ENCODE measurements at regions of chr9 and their contacts with region 1.

Region 1: GRCh38 chr9:134356570-134357504 is 30.6 kb downstream of the RXRA start:
- DNase-seq: peak; percentile 93 to 95
- H3K4me3 ChIP-seq: peak overlapping the region; percentile 63
- H3K27ac ChIP-seq: peak overlapping the region; percentile 87
- H3K4me1 ChIP-seq: peaks cover 94% of the 10 kb centered on the region
- H3K27me3 ChIP-seq: no peaks in the 10 kb centered on the region
- CTCF ChIP-seq: no peak

Region 2: GRCh38 chr9:134325817-134326723 is 30.8 kb before region 1 on chr9 and contains the start of gene RXRA:
- CTCF ChIA-PET with region 1: interaction called, 6 read pairs
- POLR2A ChIA-PET with region 1: interaction called, 5 read pairs
- intact Hi-C with region 1: loop called (anchors 1 kb)
- DNase-seq: peak; percentile 58 to 93
- H3K4me3 ChIP-seq: peak within 1 kb of the TSS; percentile 87
- H3K27ac ChIP-seq: peak within 1 kb of the TSS; percentile 66
- H3K4me1 ChIP-seq: peaks cover 32% of the 10 kb centered on the region
- H3K27me3 ChIP-seq: no peaks in the 10 kb centered on the region
- CTCF ChIP-seq: no peak
- total RNA-seq, gene RXRA: 116 and 146 TPM in 2 replicates

Region 3: DNA sequence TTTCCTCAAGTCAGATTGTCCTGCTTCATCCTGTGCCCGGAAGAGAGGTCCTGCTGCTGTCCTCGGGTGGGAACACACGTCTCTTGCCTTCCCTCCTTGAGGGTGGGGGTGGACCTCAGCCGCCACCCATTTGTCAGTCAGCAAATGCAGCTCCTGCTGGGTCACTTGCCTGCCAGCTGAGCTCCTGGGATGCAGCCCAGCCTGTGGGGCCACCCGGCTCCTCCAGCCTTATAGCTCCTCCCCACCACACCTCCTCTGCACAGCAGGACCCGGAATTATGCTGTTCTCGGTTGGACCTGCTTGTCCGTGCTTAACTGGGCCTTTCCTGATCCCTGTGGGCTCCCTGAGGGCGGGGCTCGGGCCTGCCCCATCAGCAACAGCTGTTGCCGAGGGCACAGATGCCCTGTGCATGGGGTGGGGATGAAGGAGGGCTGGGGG is 22.1 kb after region 1 on chr9:
- CTCF ChIA-PET with region 1: interaction called, 10 read pairs
- POLR2A ChIA-PET with region 1: interaction called, 19 read pairs
- intact Hi-C with region 1: loop called (anchors 1 kb)
- DNase-seq: peak; percentile 89 to 94
- H3K4me3 ChIP-seq: peak overlapping the region; percentile 36; the same call in 1 of the 2 replicates
- H3K27ac ChIP-seq: peak overlapping the region; percentile 94
- H3K4me1 ChIP-seq: peaks cover 95% of the 10 kb centered on the region
- H3K27me3 ChIP-seq: no peaks in the 10 kb centered on the region
- CTCF ChIP-seq: no peak

Region 4: DNA sequence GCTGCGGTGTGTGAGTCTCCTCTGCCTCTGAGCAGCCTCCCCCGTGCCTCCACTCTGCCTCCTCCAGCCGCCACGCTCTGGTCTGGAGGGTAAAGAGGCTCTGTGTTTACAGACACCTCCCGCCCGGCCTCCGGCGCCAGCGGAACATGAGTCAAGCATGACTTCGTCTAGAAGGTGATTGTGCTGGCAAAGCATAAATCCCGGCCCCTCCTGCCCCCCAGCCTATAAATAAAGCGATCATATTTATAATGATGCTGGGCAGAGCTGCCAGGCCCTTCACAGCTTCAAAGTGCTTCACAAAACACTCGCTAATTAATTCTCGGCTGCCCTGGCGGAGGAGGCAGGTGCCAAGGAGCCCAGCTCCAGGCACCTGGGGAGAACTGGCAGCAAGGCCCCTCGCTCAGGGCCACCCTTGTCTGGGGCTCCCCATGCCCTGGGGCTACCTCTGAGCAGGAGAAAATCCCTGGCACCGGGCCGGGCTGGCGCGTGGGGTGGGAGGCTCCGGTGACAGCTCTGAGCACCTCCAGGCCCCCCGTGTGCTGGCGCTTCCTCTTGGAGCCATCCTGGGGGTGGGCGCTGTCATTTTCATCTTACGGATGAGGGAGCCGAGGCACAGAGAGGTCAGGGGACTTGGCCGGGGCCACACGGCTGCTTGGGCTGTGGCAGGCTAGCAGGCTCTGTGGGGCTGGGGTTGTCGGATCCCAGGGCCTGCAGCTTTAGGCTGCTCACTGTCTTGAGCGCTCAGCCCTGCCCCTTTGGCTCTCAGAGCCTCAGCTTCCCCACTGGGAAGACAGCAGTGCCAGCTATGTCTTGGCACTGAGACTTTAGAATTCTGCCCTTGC is 57.3 kb after region 1 on chr9:
- CTCF ChIA-PET with region 1: no interaction called
- POLR2A ChIA-PET with region 1: no interaction called
- intact Hi-C with region 1: loop called (anchors 1 kb)
- DNase-seq: peak in 1 of 2 experiments; percentile 81
- H3K4me3 ChIP-seq: no peak overlapping the region
- H3K27ac ChIP-seq: no peak overlapping the region
- H3K4me1 ChIP-seq: peaks cover 47% of the 10 kb centered on the region
- H3K27me3 ChIP-seq: no peaks in the 10 kb centered on the region
- CTCF ChIP-seq: no peak